ENCODE measurements at regions of chr2 and their contacts with region 1.

Region 1: DNA sequence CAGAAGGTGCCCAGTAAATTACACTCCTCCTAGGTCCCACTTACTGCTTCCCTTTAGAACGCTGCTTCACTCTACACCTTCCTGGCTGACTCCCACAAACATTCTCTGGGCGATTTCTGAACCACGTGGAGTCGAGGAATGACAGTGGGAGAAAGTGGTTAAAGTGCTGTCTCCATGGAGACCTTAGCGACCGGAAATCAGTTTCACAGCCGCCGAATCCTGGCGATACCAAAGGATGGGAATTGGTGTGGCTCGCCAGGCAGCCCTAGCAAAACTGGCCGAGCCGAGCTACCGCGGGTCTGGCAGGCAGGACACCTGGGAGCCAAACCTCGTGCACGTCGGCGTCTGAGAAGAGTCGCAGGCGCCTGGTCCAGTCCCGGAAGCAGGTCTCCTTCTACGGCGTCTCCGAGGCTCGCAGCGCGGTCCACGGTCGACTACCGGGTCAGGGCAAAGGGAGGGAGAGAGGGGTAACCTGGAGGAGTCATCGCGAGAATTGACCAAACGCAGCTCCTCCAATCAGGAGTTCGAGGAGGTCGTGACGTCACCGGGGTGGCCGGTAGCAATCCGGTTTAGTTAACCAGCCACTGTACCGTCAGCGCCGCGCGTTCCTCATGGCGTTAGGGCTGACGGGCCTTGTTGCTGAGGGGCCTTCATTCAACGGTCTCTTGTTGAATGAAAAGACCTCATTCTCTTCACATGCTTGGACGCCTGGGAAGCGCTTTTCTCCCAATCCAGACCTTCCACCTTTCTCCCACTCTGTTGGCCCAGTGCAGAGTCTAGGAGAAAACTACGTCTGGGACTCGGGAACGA is at the start of gene THADA:
- DNase-seq: peak; percentile 98
- ATAC-seq: peak; percentile 99
- total RNA-seq, gene THADA: 10.5 TPM

Region 2: DNA sequence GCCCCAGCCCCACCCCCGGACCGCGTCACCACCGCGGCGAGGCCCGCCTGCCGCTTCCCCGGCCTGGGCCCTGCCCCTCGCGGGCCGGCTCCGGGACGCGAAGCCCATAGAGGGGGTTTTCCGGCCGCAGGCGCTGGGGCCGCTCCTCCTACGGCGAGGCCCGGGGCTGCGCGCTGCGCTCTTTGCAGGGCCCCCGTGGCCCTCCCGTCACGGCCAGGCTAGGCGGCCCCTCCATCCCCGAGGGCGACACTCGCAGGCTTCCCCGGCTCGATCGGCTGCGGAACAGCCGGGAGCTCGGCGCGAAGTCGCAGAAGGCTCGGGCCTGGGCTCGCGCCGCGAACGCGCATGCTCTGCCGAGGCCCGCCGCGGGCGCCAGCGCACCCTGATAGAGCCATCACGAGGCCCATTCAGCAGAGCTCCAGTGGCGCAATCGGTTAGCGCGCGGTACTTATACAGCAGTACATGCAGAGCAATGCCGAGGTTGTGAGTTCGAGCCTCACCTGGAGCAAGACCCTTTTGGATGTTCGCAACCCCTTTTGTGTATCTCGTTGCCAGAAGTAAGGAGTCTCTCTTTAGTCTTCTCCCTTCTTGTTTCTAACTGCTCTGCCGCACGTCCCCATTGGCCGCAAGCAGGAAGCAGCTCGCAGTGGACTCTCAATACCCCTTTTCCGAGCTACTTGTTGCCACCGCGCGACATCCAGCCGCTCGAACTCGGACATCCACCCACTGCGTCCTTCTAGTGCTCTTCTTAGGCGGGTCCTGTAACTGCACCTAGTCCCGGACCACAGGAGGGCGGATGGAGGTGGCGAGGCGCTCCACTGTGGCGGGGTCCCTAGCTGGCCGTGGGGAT is 785.5 kb before region 1 on chr2:
- intact Hi-C with region 1: loop called (anchors 5 kb)
- DNase-seq: peak; percentile 98
- ATAC-seq: peak; percentile 94

Measured in Right ventricle myocardium inferior (tissue), 1 donor.